Upper lobe of right lung (tissue), 1 donor: ENCODE measurements at regions of chr16 and their contacts with region 1.

Region 1: GRCh38 chr16:49918257-49918656 is 62.3 kb upstream of the ZNF423 start:
- DNase-seq: no peak
- ATAC-seq: no peak
- H3K4me3 ChIP-seq: no peak overlapping the region
- H3K27ac ChIP-seq: no peak overlapping the region
- H3K4me1 ChIP-seq: no peaks in the 10 kb centered on the region
- H3K27me3 ChIP-seq: no peaks in the 10 kb centered on the region
- CTCF ChIP-seq: no peak

Region 2: GRCh38 chr16:49407873-49408550 is 510.2 kb before region 1 on chr16:
- intact Hi-C with region 1: loop called (anchors 10 kb)
- DNase-seq: peak; percentile 90
- ATAC-seq: peak; percentile 96
- H3K4me3 ChIP-seq: no peak overlapping the region
- H3K27ac ChIP-seq: no peak overlapping the region
- H3K4me1 ChIP-seq: no peaks in the 10 kb centered on the region
- H3K27me3 ChIP-seq: no peaks in the 10 kb centered on the region
- CTCF ChIP-seq: peak; percentile 93

Region 3: GRCh38 chr16:49980166-49980565 is 61.9 kb after region 1 on chr16:
- intact Hi-C with region 1: no loop called
- DNase-seq: no peak
- ATAC-seq: no peak
- H3K4me3 ChIP-seq: no peak overlapping the region
- H3K27ac ChIP-seq: no peak overlapping the region
- H3K4me1 ChIP-seq: no peaks in the 10 kb centered on the region
- H3K27me3 ChIP-seq: no peaks in the 10 kb centered on the region
- CTCF ChIP-seq: no peak

Region 4: DNA sequence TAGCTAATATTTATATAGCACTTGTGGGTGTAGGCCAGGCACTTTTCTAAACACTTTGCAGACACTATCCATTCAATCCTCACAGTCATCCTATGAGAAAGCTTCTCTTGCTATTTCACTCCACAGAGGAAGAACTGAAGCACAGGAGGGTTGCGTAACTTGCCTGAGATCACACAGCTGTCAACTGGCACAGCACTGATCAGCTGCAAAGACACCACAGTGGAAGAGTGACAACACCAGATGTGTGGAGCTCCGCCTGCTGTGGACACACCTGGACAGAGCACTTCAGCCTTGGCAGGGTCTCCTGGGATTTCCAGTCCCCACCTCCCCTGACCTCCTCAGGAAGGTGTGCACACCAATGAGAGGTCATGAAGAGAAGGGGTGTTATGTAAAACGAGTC is 93.5 kb after region 1 on chr16:
- intact Hi-C with region 1: no loop called
- DNase-seq: no peak
- ATAC-seq: peak; percentile 66
- H3K4me3 ChIP-seq: no peak overlapping the region
- H3K27ac ChIP-seq: no peak overlapping the region
- H3K4me1 ChIP-seq: no peaks in the 10 kb centered on the region
- H3K27me3 ChIP-seq: no peaks in the 10 kb centered on the region
- CTCF ChIP-seq: no peak